ENCODE measurements at regions of chr1 and their contacts with region 1.

Region 1: GRCh38 chr1:8848663-8849386 is 29.7 kb downstream of the ENO1 start:
- DNase-seq: peak; percentile 57 to 66 (median 64)
- H3K4me3 ChIP-seq: no peak overlapping the region
- H3K4me3 Mint-ChIP-seq: no peak overlapping the region
- H3K27ac ChIP-seq: no peak overlapping the region
- H3K27ac Mint-ChIP-seq: no peak overlapping the region
- H3K4me1 ChIP-seq: no peaks in the 10 kb centered on the region
- H3K4me1 Mint-ChIP-seq: peaks cover 0 to 2% (median 0%) of the 10 kb centered on the region in 4 donors
- H3K27me3 ChIP-seq: no peaks in the 10 kb centered on the region
- H3K27me3 Mint-ChIP-seq: no peaks in the 10 kb centered on the region

Region 2: DNA sequence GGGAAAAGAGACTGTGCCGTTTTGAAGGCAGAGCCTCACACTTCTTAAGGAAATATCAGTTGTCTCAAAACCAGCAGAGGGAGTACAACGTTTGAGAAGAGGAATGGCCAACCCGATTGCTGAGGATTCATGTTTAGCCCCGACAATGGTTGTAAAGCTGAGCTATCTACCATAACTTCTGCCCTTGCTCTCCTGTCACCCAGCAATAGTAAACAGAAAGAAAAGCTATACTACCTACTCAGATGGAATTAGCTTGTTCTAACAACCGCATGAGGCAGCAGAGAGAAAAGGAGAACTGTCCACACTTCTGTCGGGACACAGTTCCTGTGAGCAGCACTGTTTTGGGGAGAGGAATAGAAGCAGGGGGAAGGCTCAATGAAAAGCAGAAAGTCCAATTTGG is 439.7 kb before region 1 on chr1:
- CTCF ChIA-PET with region 1: no interaction called
- POLR2A ChIA-PET with region 1: no interaction called
- intact Hi-C with region 1: loop called (anchors 10 kb)
- DNase-seq: peak in 4 of 5 donors; percentile 33 to 37 (median 36)
- H3K4me3 ChIP-seq: no peak overlapping the region
- H3K4me3 Mint-ChIP-seq: peak overlapping the region; percentile 21 to 79 (median 64)
- H3K27ac ChIP-seq: peak overlapping the region; percentile 37
- H3K27ac Mint-ChIP-seq: peak overlapping the region; percentile 56 to 94 (median 79)
- H3K4me1 ChIP-seq: peaks cover 92% of the 10 kb centered on the region
- H3K4me1 Mint-ChIP-seq: peaks cover 59 to 92% (median 73%) of the 10 kb centered on the region in 4 donors
- H3K27me3 ChIP-seq: no peaks in the 10 kb centered on the region
- H3K27me3 Mint-ChIP-seq: no peaks in the 10 kb centered on the region

Region 3: GRCh38 chr1:8571200-8571984 is 277.4 kb before region 1 on chr1:
- CTCF ChIA-PET with region 1: interaction called, 15 read pairs
- POLR2A ChIA-PET with region 1: no interaction called
- intact Hi-C with region 1: no loop called
- DNase-seq: no peak
- H3K4me3 ChIP-seq: no peak overlapping the region
- H3K4me3 Mint-ChIP-seq: no peak overlapping the region
- H3K27ac ChIP-seq: no peak overlapping the region
- H3K27ac Mint-ChIP-seq: no peak overlapping the region
- H3K4me1 ChIP-seq: no peaks in the 10 kb centered on the region
- H3K4me1 Mint-ChIP-seq: no peaks in the 10 kb centered on the region
- H3K27me3 ChIP-seq: no peaks in the 10 kb centered on the region
- H3K27me3 Mint-ChIP-seq: no peaks in the 10 kb centered on the region

Region 4: DNA sequence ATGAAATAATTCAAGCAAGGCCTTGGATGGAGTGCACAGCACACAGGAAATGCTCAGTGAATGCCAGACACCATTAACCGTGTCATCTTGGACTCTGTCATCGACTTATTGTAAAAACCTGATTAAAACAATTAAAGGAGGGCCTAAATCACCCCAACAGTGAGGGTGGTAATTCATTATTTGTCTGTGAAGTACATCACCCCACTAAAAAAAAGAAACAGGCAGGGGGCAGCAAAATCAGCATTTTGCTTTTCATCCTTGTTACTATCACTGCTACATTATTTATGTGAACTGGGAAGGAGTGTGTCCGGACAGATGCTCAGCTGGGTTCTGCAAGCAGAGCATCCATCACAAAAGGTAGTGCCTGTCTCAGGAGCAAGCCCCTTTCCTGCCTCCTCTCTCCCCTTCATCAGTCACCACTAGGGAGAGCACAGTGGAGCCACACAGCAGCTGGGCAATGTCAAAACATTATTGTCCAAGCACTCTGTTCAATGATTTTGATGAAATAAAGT is 129.9 kb before region 1 on chr1:
- CTCF ChIA-PET with region 1: interaction called, 10 read pairs
- POLR2A ChIA-PET with region 1: no interaction called
- intact Hi-C with region 1: no loop called
- DNase-seq: no peak
- H3K4me3 ChIP-seq: no peak overlapping the region
- H3K4me3 Mint-ChIP-seq: no peak overlapping the region
- H3K27ac ChIP-seq: no peak overlapping the region
- H3K27ac Mint-ChIP-seq: no peak overlapping the region
- H3K4me1 ChIP-seq: peaks cover 12% of the 10 kb centered on the region
- H3K4me1 Mint-ChIP-seq: peaks cover 6 to 14% (median 10%) of the 10 kb centered on the region in 4 donors
- H3K27me3 ChIP-seq: no peaks in the 10 kb centered on the region
- H3K27me3 Mint-ChIP-seq: no peaks in the 10 kb centered on the region

Region 5: GRCh38 chr1:8817406-8818324 is 31.2 kb before region 1 on chr1 and contains the start of gene RERE:
- CTCF ChIA-PET with region 1: interaction called, 18 read pairs
- POLR2A ChIA-PET with region 1: no interaction called
- intact Hi-C with region 1: no loop called
- DNase-seq: peak; percentile 93 to 100 (median 98)
- H3K4me3 ChIP-seq: peak within 1 kb of the TSS; percentile 79 to 80
- H3K4me3 Mint-ChIP-seq: peak within 1 kb of the TSS; percentile 86 to 97 (median 94)
- H3K27ac ChIP-seq: peak within 1 kb of the TSS; percentile 81
- H3K27ac Mint-ChIP-seq: peak within 1 kb of the TSS; percentile 91 to 99 (median 98)
- H3K4me1 ChIP-seq: peaks cover 28% of the 10 kb centered on the region
- H3K4me1 Mint-ChIP-seq: peaks cover 24 to 40% (median 29%) of the 10 kb centered on the region in 4 donors
- H3K27me3 ChIP-seq: no peaks in the 10 kb centered on the region
- H3K27me3 Mint-ChIP-seq: peaks cover 2 to 3% of the 10 kb centered on the region in 2 donors
- total RNA-seq, gene RERE: 104 to 117 TPM

Region 6: GRCh38 chr1:8858888-8859706 is 10.3 kb after region 1 on chr1:
- CTCF ChIA-PET with region 1: interaction called, 123 read pairs
- POLR2A ChIA-PET with region 1: interaction called, 3 read pairs
- intact Hi-C with region 1: no loop called
- DNase-seq: peak; percentile 50 to 58 (median 55)
- H3K4me3 ChIP-seq: no peak overlapping the region
- H3K4me3 Mint-ChIP-seq: peak overlapping the region in 5 of 8 donors; percentile 2 to 43 (median 6)
- H3K27ac ChIP-seq: no peak overlapping the region
- H3K27ac Mint-ChIP-seq: peak overlapping the region; percentile 64 to 91 (median 76)
- H3K4me1 ChIP-seq: peaks cover 10% of the 10 kb centered on the region
- H3K4me1 Mint-ChIP-seq: peaks cover 10 to 32% (median 20%) of the 10 kb centered on the region in 4 donors
- H3K27me3 ChIP-seq: no peaks in the 10 kb centered on the region
- H3K27me3 Mint-ChIP-seq: no peaks in the 10 kb centered on the region

Region 7: GRCh38 chr1:8878448-8879347 is 29.9 kb after region 1 on chr1 and contains the start of gene ENO1:
- CTCF ChIA-PET with region 1: interaction called, 11 read pairs
- POLR2A ChIA-PET with region 1: interaction called, 4 read pairs
- intact Hi-C with region 1: no loop called
- DNase-seq: peak; percentile 98 to 100 (median 99)
- H3K4me3 ChIP-seq: peak within 1 kb of the TSS; percentile 73 to 94
- H3K4me3 Mint-ChIP-seq: peak within 1 kb of the TSS; percentile 93 to 97 (median 95)
- H3K27ac ChIP-seq: peak within 1 kb of the TSS; percentile 89
- H3K27ac Mint-ChIP-seq: peak within 1 kb of the TSS; percentile 94 to 99 (median 97)
- H3K4me1 ChIP-seq: peaks cover 48% of the 10 kb centered on the region
- H3K4me1 Mint-ChIP-seq: peaks cover 26 to 61% (median 36%) of the 10 kb centered on the region in 4 donors
- H3K27me3 ChIP-seq: no peaks in the 10 kb centered on the region
- H3K27me3 Mint-ChIP-seq: no peaks in the 10 kb centered on the region
- total RNA-seq, gene ENO1: 291 to 305 TPM

Region 8: GRCh38 chr1:8911416-8911815 is 62.6 kb after region 1 on chr1:
- CTCF ChIA-PET with region 1: no interaction called
- POLR2A ChIA-PET with region 1: no interaction called
- intact Hi-C with region 1: no loop called
- DNase-seq: no peak
- H3K4me3 ChIP-seq: no peak overlapping the region
- H3K4me3 Mint-ChIP-seq: no peak overlapping the region
- H3K27ac ChIP-seq: no peak overlapping the region
- H3K27ac Mint-ChIP-seq: peak overlapping the region in 1 of 7 donors; percentile 47
- H3K4me1 ChIP-seq: no peaks in the 10 kb centered on the region
- H3K4me1 Mint-ChIP-seq: no peaks in the 10 kb centered on the region
- H3K27me3 ChIP-seq: no peaks in the 10 kb centered on the region
- H3K27me3 Mint-ChIP-seq: peaks cover 0 to 6% of the 10 kb centered on the region in 2 donors

Region 9: DNA sequence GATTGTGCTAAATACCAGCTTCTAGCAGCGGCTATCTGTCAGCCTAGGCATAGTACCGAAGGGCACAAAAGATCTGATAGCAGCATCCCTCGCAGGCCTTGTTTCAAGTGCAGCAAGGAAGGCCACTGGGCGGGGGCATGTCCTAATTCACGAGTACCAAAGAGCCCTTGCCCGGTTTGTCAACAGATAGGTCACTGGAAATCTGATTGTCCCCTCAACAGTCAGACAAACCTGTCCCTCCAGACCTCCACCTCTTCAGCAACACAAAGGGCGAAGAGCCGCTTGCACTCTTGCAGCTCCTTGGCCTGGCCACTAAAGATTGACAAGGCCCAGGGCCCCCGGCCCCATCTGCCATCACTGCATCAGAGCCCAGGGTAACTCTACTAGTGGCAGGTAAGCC is 74.1 kb after region 1 on chr1:
- CTCF ChIA-PET with region 1: no interaction called
- POLR2A ChIA-PET with region 1: no interaction called
- intact Hi-C with region 1: no loop called
- DNase-seq: no peak
- H3K4me3 ChIP-seq: no peak overlapping the region
- H3K4me3 Mint-ChIP-seq: no peak overlapping the region
- H3K27ac ChIP-seq: no peak overlapping the region
- H3K27ac Mint-ChIP-seq: no peak overlapping the region
- H3K4me1 ChIP-seq: peaks cover 21% of the 10 kb centered on the region
- H3K4me1 Mint-ChIP-seq: peaks cover 11 to 25% (median 17%) of the 10 kb centered on the region in 4 donors
- H3K27me3 ChIP-seq: no peaks in the 10 kb centered on the region
- H3K27me3 Mint-ChIP-seq: no peaks in the 10 kb centered on the region